K562 (cell line): ENCODE measurements at regions of chr11 and their contacts with region 1.

Region 1: DNA sequence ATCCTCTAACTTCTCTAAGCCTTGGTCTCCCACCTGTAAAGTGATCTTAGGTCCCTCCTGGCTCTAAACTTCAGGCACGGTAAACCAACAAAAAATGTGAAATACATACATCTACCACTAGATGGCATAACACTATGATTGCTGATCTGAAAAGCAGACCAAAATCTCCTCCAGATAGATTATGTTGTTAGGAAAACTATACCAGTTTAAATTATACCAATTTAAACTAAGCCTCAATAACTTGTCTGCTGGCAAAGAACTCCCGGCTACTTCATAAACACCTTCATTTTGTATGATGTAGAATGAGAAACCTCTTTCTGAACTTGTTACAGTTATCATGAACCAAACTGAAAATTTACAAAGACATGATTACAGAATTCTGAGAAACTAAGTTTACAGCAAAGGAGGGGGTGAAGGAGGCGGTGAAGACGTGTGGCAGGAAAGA is 85.9 kb downstream of the SBF2 start:
- DNase-seq: peak; percentile 35 to 45 (median 40)
- ATAC-seq: peak; percentile 77
- H3K4me3 ChIP-seq: no peak overlapping the region
- H3K27ac ChIP-seq: no peak overlapping the region
- H3K4me1 ChIP-seq: no peaks in the 10 kb centered on the region
- H3K27me3 ChIP-seq: no peaks in the 10 kb centered on the region
- CTCF ChIP-seq: peak; percentile 47 to 73 (median 63); a peak in 5 of 6 replicates
- EP300 ChIP-seq: no peak
- POLR2A ChIP-seq: no peak
- RAD21 ChIP-seq: peak; percentile 58 to 67; a peak in 3 of 4 replicates

Region 2: GRCh38 chr11:10307442-10308207 is 99.5 kb after region 1 on chr11:
- CTCF ChIA-PET with region 1: interaction called, 4 read pairs
- POLR2A ChIA-PET with region 1: interaction called, 4 read pairs
- in situ Hi-C with region 1: no loop called
- intact Hi-C with region 1: loop called (anchors 1 kb)
- DNase-seq: peak; percentile 81 to 87 (median 84)
- ATAC-seq: peak; percentile 94
- H3K4me3 ChIP-seq: peak overlapping the region; percentile 32
- H3K27ac ChIP-seq: no peak overlapping the region; the same call in 2 of the 3 replicates
- H3K4me1 ChIP-seq: peaks cover 24 to 50% of the 10 kb centered on the region in 2 experiments
- H3K27me3 ChIP-seq: peaks cover 15 to 19% of the 10 kb centered on the region in 2 experiments
- CTCF ChIP-seq: peak; percentile 87 to 97 (median 88)
- EP300 ChIP-seq: no peak
- POLR2A ChIP-seq: no peak
- RAD21 ChIP-seq: peak; percentile 85 to 89

Region 3: GRCh38 chr11:10322830-10323792 is 115.0 kb after region 1 on chr11:
- CTCF ChIA-PET with region 1: interaction called, 6 read pairs
- POLR2A ChIA-PET with region 1: no interaction called
- in situ Hi-C with region 1: no loop called
- intact Hi-C with region 1: loop called (anchors 1 kb)
- DNase-seq: peak; percentile 36 to 77 (median 51)
- ATAC-seq: peak; percentile 91
- H3K4me3 ChIP-seq: no peak overlapping the region
- H3K27ac ChIP-seq: no peak overlapping the region
- H3K4me1 ChIP-seq: peaks cover 0 to 5% of the 10 kb centered on the region in 2 experiments; a peak in 2 of 5 replicates
- H3K27me3 ChIP-seq: no peaks in the 10 kb centered on the region
- CTCF ChIP-seq: peak; percentile 46 to 82 (median 57); a peak in 4 of 6 replicates
- EP300 ChIP-seq: no peak; the same call in 1 of the 2 replicates
- POLR2A ChIP-seq: no peak
- RAD21 ChIP-seq: peak; percentile 71 to 72